Ovary (tissue), 10 donors: ENCODE measurements at regions of chrX and their contacts with region 1.

Region 1: GRCh38 chrX:101051549-101052302 is at the start of gene TRMT2B:
- DNase-seq: peak; percentile 63 to 79 (median 74)
- H3K4me3 ChIP-seq: peak within 1 kb of the TSS; percentile 50
- H3K27ac ChIP-seq: peak within 1 kb of the TSS; percentile 22 to 71
- H3K4me1 ChIP-seq: no peaks in the 10 kb centered on the region
- H3K27me3 ChIP-seq: no peaks in the 10 kb centered on the region
- CTCF ChIP-seq: no peak
- EP300 ChIP-seq: no peak
- POLR2A ChIP-seq: no peak
- total RNA-seq, gene TRMT2B: 9.9 to 18.1 (median 15.3) TPM

Region 2: DNA sequence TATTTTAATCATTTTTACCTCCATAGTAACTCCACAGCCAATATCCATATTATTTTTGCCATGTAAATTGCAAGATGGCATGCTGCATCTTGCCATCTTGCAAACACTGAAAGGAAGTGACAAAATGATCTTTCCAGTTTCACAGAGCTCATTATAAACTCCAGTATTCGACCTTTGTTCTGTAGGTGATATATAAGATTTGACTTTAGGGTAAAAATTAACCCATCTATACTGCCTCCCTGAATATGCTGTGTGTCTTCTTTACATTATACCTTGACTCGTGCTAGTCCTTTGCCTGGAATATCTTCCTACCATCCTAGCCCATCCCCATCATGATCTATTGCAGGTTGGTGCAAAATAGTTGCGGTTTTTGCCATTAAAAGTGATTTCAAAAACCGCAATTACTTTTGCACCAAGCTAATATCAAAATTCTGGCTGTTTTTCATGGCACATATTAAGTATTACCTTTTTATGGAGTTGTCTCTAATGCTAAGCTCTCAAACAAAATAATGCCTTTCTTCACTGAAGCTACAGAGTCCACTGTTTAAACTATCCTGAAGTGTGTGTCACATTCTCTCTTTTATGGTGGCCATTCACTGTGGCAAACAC is 802.7 kb before region 1 on chrX:
- intact Hi-C with region 1: no loop called
- DNase-seq: no peak
- H3K4me3 ChIP-seq: no peak overlapping the region
- H3K27ac ChIP-seq: no peak overlapping the region
- H3K4me1 ChIP-seq: no peaks in the 10 kb centered on the region
- H3K27me3 ChIP-seq: no peaks in the 10 kb centered on the region
- CTCF ChIP-seq: no peak
- EP300 ChIP-seq: no peak
- POLR2A ChIP-seq: no peak

Region 3: GRCh38 chrX:102745857-102746584 is 1694.3 kb after region 1 on chrX:
- intact Hi-C with region 1: loop called in 1 of 4 experiments (anchors 5 kb)
- DNase-seq: peak; percentile 41 to 69 (median 59)
- H3K4me3 ChIP-seq: peak overlapping the region; percentile 49
- H3K27ac ChIP-seq: peak overlapping the region; percentile 9 to 39
- H3K4me1 ChIP-seq: no peaks in the 10 kb centered on the region
- H3K27me3 ChIP-seq: no peaks in the 10 kb centered on the region
- CTCF ChIP-seq: no peak
- EP300 ChIP-seq: no peak
- POLR2A ChIP-seq: no peak

Region 4: GRCh38 chrX:103017542-103017941 is 1965.8 kb after region 1 on chrX:
- intact Hi-C with region 1: no loop called
- DNase-seq: no peak
- H3K4me3 ChIP-seq: no peak overlapping the region
- H3K27ac ChIP-seq: no peak overlapping the region
- H3K4me1 ChIP-seq: no peaks in the 10 kb centered on the region
- H3K27me3 ChIP-seq: no peaks in the 10 kb centered on the region
- CTCF ChIP-seq: no peak
- EP300 ChIP-seq: no peak
- POLR2A ChIP-seq: no peak